ENCODE measurements at regions of chr10 and their contacts with region 1.

Region 1: DNA sequence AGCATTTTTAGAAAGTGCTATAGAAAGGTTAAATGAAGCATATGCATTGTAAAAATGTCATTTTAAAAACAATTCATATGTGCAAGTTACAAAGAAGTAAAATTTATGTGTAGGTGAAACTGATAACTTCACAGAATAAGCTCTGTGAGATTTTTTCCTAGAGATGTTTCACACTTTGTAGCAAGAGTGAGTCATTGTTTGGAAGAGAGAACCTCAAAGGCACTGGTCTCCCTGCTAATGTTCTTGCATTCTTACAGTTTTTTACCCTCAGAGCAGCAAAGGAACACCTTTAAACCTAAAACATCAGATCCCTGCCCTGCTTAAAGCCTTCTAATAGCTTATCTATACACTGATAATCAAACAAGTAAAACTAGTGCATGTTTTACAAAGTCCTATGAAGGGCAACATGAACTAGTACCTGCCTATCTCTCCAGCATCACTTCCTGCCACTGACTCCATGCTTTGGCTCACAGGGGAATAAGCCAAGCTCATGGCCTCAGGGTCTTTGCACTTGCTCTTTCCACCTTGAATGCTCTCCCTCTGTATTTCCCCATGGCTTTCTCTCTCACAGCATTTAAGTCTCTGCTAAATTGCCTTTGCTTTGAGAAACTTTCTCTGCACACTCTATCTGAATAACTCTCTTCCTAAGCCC is 997.0 kb downstream of the GATA3 start:
- DNase-seq: no peak
- H3K4me3 ChIP-seq: no peak overlapping the region
- H3K27ac ChIP-seq: no peak overlapping the region
- H3K4me1 ChIP-seq: no peaks in the 10 kb centered on the region
- H3K27me3 ChIP-seq: no peaks in the 10 kb centered on the region
- CTCF ChIP-seq: no peak

Region 2: GRCh38 chr10:8787649-8788048 is 263.8 kb before region 1 on chr10:
- CTCF ChIA-PET with region 1: no interaction called
- POLR2A ChIA-PET with region 1: interaction called, 10 read pairs
- intact Hi-C with region 1: no loop called
- DNase-seq: no peak
- H3K4me3 ChIP-seq: no peak overlapping the region
- H3K27ac ChIP-seq: no peak overlapping the region
- H3K4me1 ChIP-seq: no peaks in the 10 kb centered on the region
- H3K27me3 ChIP-seq: no peaks in the 10 kb centered on the region
- CTCF ChIP-seq: no peak

Region 3: DNA sequence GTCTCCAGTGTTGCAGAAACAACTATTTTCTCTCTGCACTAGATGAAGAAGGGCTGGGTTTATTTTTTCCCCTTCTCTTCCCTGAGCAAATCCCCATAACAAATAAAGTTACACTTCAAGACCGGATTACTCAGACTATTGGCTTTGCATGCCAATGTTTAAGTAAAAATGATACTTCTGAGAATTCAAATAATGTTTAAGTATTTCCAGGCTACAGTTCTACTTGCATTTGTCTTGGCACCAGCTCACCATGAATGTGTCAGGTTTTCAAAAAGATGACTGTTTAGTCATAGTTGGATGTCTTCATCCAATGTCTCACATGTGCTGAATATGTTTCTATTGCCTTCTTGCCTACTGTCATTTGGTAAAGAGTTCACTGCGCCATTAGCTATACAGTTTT is 84.4 kb before region 1 on chr10:
- CTCF ChIA-PET with region 1: no interaction called
- POLR2A ChIA-PET with region 1: no interaction called
- intact Hi-C with region 1: no loop called
- DNase-seq: no peak
- H3K4me3 ChIP-seq: no peak overlapping the region
- H3K27ac ChIP-seq: no peak overlapping the region
- H3K4me1 ChIP-seq: peaks cover 3% of the 10 kb centered on the region
- H3K27me3 ChIP-seq: no peaks in the 10 kb centered on the region
- CTCF ChIP-seq: no peak

Region 4: GRCh38 chr10:9091530-9092093 is 40.2 kb after region 1 on chr10:
- CTCF ChIA-PET with region 1: no interaction called
- POLR2A ChIA-PET with region 1: no interaction called
- intact Hi-C with region 1: no loop called
- DNase-seq: no peak
- H3K4me3 ChIP-seq: no peak overlapping the region
- H3K27ac ChIP-seq: no peak overlapping the region
- H3K4me1 ChIP-seq: no peaks in the 10 kb centered on the region
- H3K27me3 ChIP-seq: no peaks in the 10 kb centered on the region
- CTCF ChIP-seq: no peak

Region 5: DNA sequence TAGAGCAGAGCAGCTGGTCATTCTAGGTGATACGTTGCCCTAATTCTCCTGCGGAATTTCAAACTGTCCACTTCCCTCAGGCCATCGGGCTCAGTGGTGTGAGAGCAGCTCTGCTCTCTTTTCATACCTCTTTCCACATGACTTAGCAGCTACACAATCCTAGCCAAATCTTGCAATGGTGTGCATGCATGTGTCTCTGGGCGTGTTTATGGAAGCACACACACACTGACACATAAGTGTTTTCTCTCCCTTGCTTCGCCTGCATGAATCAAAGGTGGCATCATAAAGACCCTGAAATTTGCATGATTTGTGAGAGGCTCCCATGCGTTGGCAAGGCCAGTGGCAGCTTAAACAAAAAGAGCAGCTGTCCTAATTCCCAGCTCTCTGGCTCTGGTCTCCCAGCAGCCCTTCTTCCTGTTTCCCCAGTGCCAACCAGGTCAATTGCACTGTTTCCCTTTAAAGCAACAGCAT is 192.5 kb after region 1 on chr10:
- CTCF ChIA-PET with region 1: no interaction called
- POLR2A ChIA-PET with region 1: no interaction called
- intact Hi-C with region 1: no loop called
- DNase-seq: no peak
- H3K4me3 ChIP-seq: no peak overlapping the region
- H3K27ac ChIP-seq: no peak overlapping the region
- H3K4me1 ChIP-seq: no peaks in the 10 kb centered on the region
- H3K27me3 ChIP-seq: no peaks in the 10 kb centered on the region
- CTCF ChIP-seq: no peak

Measured in PC-9 (cell line).